ENCODE measurements at regions of chr12 and their contacts with region 1.

Region 1: DNA sequence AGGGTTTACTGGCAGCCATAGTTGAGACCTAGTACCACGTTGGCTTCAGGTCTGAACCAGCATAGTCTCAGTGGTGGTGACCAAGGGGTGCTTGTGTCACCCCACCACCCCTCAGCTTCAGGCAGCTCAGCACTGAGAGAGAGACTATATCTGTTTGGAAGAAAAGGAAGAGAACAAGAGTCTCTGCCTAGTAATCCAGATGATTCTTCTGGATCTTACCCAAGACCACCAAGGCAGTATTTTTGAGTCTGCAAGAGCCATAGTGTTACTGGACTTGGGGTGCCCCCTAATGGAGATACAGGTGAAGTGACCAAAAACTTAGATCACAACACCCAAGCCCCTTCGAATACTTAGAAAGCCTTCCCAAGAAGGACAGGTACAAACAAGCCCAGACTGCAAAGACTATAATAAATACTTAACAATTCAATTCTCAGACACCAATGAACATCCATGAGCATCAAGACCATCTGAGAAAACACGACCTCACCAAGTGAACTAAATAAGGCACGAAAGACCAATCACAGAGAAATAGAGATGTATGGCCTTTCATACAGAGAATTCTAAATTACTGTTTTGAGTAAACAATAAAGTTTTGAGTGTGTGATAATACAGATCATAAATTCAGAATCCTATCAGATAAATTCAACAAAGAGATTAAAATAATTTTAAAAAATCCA is 107.0 kb downstream of the HELB start:
- DNase-seq: peak; percentile 56
- ATAC-seq: peak; percentile 58
- H3K4me3 Mint-ChIP-seq: no peak overlapping the region
- H3K27ac Mint-ChIP-seq: no peak overlapping the region
- H3K4me1 Mint-ChIP-seq: no peaks in the 10 kb centered on the region
- H3K27me3 Mint-ChIP-seq: peaks cover 13% of the 10 kb centered on the region

Region 2: DNA sequence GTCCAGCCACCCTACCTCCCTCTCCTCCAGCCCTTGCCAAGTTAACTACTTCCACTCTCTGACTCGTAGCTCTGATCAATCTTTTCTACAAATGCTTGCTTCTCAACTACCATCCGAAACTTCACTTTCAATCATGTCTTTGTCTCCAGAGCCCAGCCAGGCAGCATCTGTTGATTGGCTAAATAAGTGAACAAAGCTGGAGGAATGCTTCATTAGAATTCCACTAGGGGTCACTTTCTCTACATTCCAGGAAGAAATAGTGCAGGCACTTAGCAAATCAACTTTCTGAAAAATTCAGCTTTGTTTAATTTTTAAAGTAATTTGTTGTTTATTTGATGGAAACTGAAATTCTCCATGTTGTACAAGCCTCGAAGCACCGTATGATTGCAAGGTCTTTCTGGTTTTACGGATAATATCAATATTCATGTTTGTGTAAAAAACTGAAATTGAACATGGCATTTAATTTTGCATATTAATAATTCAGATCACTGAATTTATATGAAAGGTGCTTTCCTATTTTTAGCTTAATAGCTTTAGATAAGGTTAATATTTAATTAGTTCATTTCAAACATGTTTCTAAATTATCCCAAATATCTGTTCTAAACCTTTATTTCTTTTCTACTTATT is 139.5 kb before region 1 on chr12:
- CTCF ChIA-PET with region 1: interaction called, 60 read pairs
- DNase-seq: no peak
- ATAC-seq: no peak
- H3K4me3 Mint-ChIP-seq: no peak overlapping the region
- H3K27ac Mint-ChIP-seq: no peak overlapping the region
- H3K4me1 Mint-ChIP-seq: peaks cover 2% of the 10 kb centered on the region
- H3K27me3 Mint-ChIP-seq: no peaks in the 10 kb centered on the region

Region 3: GRCh38 chr12:66279123-66279712 is 130.1 kb before region 1 on chr12:
- CTCF ChIA-PET with region 1: interaction called, 60 read pairs
- DNase-seq: peak; percentile 69
- ATAC-seq: peak; percentile 79
- H3K4me3 Mint-ChIP-seq: no peak overlapping the region
- H3K27ac Mint-ChIP-seq: no peak overlapping the region
- H3K4me1 Mint-ChIP-seq: peaks cover 23% of the 10 kb centered on the region
- H3K27me3 Mint-ChIP-seq: no peaks in the 10 kb centered on the region

Region 4: GRCh38 chr12:66398931-66399910 is 10.1 kb before region 1 on chr12:
- CTCF ChIA-PET with region 1: interaction called, 15 read pairs
- DNase-seq: peak; percentile 46
- ATAC-seq: peak; percentile 23
- H3K4me3 Mint-ChIP-seq: no peak overlapping the region
- H3K27ac Mint-ChIP-seq: no peak overlapping the region
- H3K4me1 Mint-ChIP-seq: peaks cover 13% of the 10 kb centered on the region
- H3K27me3 Mint-ChIP-seq: peaks cover 9% of the 10 kb centered on the region